AG04450 (cell line): ENCODE measurements at regions of chr17 and their contacts with region 1.

Region 1: DNA sequence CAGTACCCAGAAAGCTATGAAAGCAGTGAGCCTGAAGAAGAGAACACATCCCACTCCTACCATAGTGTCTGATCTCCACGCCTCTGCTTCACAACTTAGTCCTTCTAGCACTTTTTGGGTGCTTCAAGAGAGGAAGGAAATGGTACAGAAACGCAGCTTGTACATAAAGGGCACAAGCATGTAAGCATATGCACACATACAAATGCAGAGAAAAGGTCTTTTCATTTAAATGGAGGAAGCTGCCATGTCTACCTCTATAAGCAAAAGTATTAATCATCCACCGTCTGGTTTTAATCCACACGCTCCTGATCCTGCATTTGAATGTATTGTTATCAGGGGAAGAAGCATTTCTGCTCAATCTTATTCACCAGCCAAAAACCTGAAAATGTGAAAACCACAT is 100.7 kb downstream of the HIC1 start:
- DNase-seq: no peak
- H3K4me3 ChIP-seq: no peak overlapping the region
- H3K27ac ChIP-seq: no peak overlapping the region
- H3K27me3 ChIP-seq: no peaks in the 10 kb centered on the region
- CTCF ChIP-seq: no peak

Region 2: DNA sequence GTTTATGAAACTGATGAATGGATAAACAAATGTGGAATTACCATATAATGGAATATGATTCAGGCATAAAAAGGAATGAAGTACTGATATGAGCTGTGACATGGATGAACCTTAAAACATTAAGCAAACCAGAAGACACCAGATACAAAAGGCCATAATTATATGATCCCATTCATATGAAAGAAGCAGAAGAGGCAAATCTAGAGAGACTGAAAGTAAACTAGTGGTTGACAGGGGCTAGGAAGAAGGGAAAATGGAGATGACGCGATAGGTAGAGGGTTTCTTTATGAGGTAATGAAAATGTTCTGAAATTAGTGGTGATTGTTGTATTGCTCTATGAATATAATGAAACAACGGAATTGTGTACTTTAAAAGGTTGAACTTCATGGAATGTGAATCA is 12.2 kb before region 1 on chr17:
- CTCF ChIA-PET with region 1: no interaction called
- POLR2A ChIA-PET with region 1: interaction called, 14 read pairs
- DNase-seq: no peak
- H3K4me3 ChIP-seq: no peak overlapping the region
- H3K27ac ChIP-seq: no peak overlapping the region
- H3K27me3 ChIP-seq: no peaks in the 10 kb centered on the region
- CTCF ChIP-seq: no peak